ENCODE measurements at regions of chr5 and their contacts with region 1.

Region 1: GRCh38 chr5:31825518-31826068 is 186.7 kb downstream of the PDZD2 start:
- DNase-seq: peak; percentile 10
- H3K4me3 ChIP-seq: no peak overlapping the region
- H3K27ac ChIP-seq: no peak overlapping the region
- H3K27me3 ChIP-seq: peaks cover 3% of the 10 kb centered on the region
- CTCF ChIP-seq: peak; percentile 69

Region 2: DNA sequence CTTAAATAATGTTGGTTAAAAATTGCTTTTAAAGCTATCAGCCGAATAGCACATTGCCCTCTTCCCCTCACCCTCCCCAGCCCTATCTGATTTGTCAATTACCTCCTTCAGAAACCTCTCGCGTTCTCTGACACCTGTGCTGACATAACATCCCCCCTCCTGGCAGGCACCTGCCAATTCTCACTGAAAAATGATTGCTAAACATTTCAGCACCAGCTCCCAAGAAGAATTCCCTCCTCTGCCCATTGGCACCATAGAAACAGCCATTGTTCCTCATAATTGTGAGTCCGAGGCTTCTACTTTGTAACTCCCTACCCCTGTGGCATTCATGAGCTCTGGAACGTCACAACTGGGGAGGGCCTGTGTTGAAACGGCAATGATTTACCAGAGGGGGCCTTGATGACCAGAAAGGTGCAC is 611.9 kb before region 1 on chr5:
- CTCF ChIA-PET with region 1: no interaction called
- POLR2A ChIA-PET with region 1: no interaction called
- DNase-seq: no peak
- H3K4me3 ChIP-seq: no peak overlapping the region
- H3K27ac ChIP-seq: no peak overlapping the region
- H3K27me3 ChIP-seq: no peaks in the 10 kb centered on the region
- CTCF ChIP-seq: no peak

Region 3: GRCh38 chr5:31809050-31809870 is 16.3 kb before region 1 on chr5:
- CTCF ChIA-PET with region 1: interaction called, 11 read pairs
- POLR2A ChIA-PET with region 1: no interaction called
- DNase-seq: peak; percentile 32
- H3K4me3 ChIP-seq: no peak overlapping the region
- H3K27ac ChIP-seq: no peak overlapping the region
- H3K27me3 ChIP-seq: peaks cover 5% of the 10 kb centered on the region
- CTCF ChIP-seq: peak; percentile 76

Region 4: GRCh38 chr5:32092938-32093812 is 267.6 kb after region 1 on chr5:
- CTCF ChIA-PET with region 1: interaction called, 57 read pairs
- POLR2A ChIA-PET with region 1: no interaction called
- DNase-seq: peak; percentile 38
- H3K4me3 ChIP-seq: no peak overlapping the region
- H3K27ac ChIP-seq: no peak overlapping the region
- H3K27me3 ChIP-seq: no peaks in the 10 kb centered on the region
- CTCF ChIP-seq: peak; percentile 83

Region 5: GRCh38 chr5:32383065-32383464 is 557.5 kb after region 1 on chr5:
- CTCF ChIA-PET with region 1: interaction called, 13 read pairs
- POLR2A ChIA-PET with region 1: no interaction called
- DNase-seq: no peak
- H3K4me3 ChIP-seq: no peak overlapping the region
- H3K27ac ChIP-seq: no peak overlapping the region
- H3K27me3 ChIP-seq: no peaks in the 10 kb centered on the region
- CTCF ChIP-seq: no peak